ENCODE measurements at regions of chr2 and their contacts with region 1.

Region 1: DNA sequence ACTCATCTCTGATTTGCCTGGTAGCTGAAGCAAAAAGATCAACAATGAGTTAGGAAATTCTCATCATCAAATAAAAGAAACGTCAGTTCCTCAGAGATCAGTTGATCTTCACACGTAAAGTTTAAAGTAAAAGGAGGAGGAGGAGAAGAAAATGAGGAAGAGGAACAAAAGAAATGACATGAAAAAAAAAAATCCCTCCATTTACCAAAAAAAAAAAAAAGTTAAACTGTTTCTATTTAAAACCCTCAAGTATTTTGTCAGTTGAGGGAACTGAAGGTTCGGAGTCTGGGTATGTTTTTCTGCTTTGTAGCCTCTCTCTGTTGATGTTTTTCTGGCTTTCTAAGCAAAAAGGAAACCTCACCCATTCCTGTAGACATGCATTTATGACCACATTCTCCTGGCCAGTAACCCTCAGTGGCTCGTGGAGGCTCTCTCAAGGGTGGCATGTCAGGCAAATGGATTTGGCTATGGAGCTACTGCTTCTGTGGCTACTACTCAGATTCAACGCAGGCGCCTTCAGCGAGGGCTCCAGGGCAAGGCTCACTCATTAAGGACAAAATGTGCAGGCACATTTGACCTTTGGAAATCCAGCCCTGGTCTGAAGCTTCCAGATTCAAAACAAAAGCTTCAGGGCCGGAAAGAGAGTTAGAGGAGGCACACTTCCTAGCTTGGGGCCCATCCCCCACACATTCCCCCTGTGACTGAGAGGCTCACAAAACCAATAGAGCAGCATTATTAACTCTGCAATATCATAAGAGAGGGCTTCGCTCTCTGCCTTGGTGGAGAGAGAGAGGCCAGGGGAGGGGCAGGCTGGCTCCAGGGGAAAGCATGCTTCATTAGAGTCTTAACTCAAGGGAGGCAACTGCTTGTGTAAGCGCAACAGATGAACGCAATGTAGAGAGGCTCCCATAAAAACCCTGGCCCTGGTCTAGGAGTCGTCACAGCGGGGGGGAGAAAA is 22.3 kb downstream of the KLF7 start:
- DNase-seq: peak; percentile 91
- H3K4me3 ChIP-seq: peak overlapping the region in 1 of 3 experiments; percentile 51
- H3K27ac ChIP-seq: peak overlapping the region; percentile 88
- H3K4me1 ChIP-seq: peaks cover 36% of the 10 kb centered on the region
- H3K27me3 ChIP-seq: no peaks in the 10 kb centered on the region
- CTCF ChIP-seq: no peak
- POLR2A ChIP-seq: no peak

Region 2: GRCh38 chr2:207008105-207008990 is 135.1 kb before region 1 on chr2:
- CTCF ChIA-PET with region 1: no interaction called
- POLR2A ChIA-PET with region 1: no interaction called
- dilution Hi-C with region 1: no loop called
- intact Hi-C with region 1: no loop called
- DNase-seq: peak; percentile 35
- H3K4me3 ChIP-seq: no peak overlapping the region
- H3K27ac ChIP-seq: peak overlapping the region; percentile 37
- H3K4me1 ChIP-seq: peaks cover 18% of the 10 kb centered on the region
- H3K27me3 ChIP-seq: no peaks in the 10 kb centered on the region
- CTCF ChIP-seq: peak in 1 of 2 donors; percentile 8
- POLR2A ChIP-seq: no peak

Region 3: GRCh38 chr2:207083361-207084110 is 60.0 kb before region 1 on chr2:
- CTCF ChIA-PET with region 1: no interaction called
- POLR2A ChIA-PET with region 1: no interaction called
- dilution Hi-C with region 1: no loop called
- intact Hi-C with region 1: no loop called
- DNase-seq: no peak
- H3K4me3 ChIP-seq: no peak overlapping the region
- H3K27ac ChIP-seq: no peak overlapping the region
- H3K4me1 ChIP-seq: peaks cover 28% of the 10 kb centered on the region
- H3K27me3 ChIP-seq: no peaks in the 10 kb centered on the region
- CTCF ChIP-seq: no peak
- POLR2A ChIP-seq: no peak

Region 4: DNA sequence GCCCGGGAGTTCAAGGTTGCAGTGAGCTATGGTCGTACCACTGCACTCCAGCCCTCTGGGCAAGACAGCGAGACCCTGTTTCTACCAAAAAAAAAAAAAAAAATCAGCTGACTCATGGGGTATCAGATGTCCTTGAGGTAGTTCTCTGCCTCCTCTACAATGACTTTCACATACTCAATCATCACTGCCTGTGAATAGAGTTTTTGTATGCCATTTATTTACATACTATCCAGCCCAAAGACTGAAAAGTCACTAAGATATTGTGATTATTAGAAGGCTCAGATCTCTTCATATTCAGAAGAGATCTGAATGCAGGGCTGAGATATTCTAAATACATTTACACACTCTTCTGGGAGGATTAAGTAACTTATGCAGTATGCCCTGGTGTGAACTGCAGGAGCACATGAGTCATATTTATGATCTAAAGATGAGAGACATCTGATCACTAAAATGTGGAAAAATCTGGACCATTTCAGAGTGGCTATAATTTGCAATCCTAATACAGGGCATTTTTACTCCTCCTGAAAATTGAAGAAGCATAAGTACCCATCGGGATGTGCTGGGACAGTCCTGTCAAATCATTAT is 16.7 kb before region 1 on chr2:
- CTCF ChIA-PET with region 1: interaction called, 29 read pairs
- POLR2A ChIA-PET with region 1: no interaction called
- dilution Hi-C with region 1: no loop called
- intact Hi-C with region 1: no loop called
- DNase-seq: no peak
- H3K4me3 ChIP-seq: no peak overlapping the region
- H3K27ac ChIP-seq: no peak overlapping the region
- H3K4me1 ChIP-seq: peaks cover 53% of the 10 kb centered on the region
- H3K27me3 ChIP-seq: no peaks in the 10 kb centered on the region
- CTCF ChIP-seq: no peak
- POLR2A ChIP-seq: no peak

Region 5: GRCh38 chr2:207156451-207157161 is 13.1 kb after region 1 on chr2:
- CTCF ChIA-PET with region 1: interaction called, 23 read pairs
- POLR2A ChIA-PET with region 1: no interaction called
- dilution Hi-C with region 1: no loop called
- intact Hi-C with region 1: loop called (anchors 1 kb)
- DNase-seq: no peak
- H3K4me3 ChIP-seq: no peak overlapping the region
- H3K27ac ChIP-seq: no peak overlapping the region
- H3K4me1 ChIP-seq: peaks cover 98% of the 10 kb centered on the region
- H3K27me3 ChIP-seq: no peaks in the 10 kb centered on the region
- CTCF ChIP-seq: no peak
- POLR2A ChIP-seq: no peak

Region 6: DNA sequence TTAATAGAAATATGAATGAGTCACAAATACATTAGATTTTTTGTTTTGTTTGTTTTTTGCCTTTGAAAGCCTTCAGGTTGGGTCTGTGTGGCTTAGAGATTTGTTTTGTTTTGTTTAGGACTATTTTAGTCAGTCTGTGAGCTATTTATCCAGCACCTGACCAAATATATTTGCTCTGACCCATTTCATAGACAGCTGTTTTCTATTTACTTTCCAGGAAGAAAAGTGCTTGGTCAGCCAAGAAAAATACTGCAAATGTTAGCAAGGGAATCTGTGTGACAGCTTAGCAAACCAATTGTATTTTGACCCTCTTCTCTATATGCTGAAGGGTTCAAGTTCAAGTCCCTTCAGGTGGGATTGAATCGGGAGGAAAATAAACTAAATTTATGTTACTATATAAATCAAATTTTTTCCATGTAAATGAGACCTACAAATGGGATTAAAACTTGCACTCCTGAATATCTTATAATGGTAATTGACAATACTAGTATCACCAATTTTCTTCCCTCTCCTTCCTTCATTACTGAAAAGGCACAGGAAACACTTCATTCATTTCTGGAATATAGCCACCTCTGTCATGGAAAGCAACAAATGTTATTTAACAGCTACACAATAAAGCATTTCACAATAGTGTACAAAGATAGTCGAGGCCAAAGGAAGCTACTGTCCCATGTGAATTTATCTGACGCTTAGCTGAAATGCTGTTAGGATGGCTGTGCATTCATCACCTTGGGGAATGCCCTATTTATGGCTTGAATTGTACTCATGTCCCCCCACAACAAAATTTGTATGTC is 45.3 kb after region 1 on chr2:
- CTCF ChIA-PET with region 1: no interaction called
- POLR2A ChIA-PET with region 1: no interaction called
- dilution Hi-C with region 1: no loop called
- intact Hi-C with region 1: no loop called
- DNase-seq: peak; percentile 72
- H3K4me3 ChIP-seq: no peak overlapping the region
- H3K27ac ChIP-seq: no peak overlapping the region
- H3K4me1 ChIP-seq: peaks cover 4% of the 10 kb centered on the region
- H3K27me3 ChIP-seq: no peaks in the 10 kb centered on the region
- CTCF ChIP-seq: no peak
- POLR2A ChIP-seq: no peak

Measured in endothelial cell of umbilical vein (primary cell).